PC-9 (cell line): ENCODE measurements at regions of chr11 and their contacts with region 1.

Region 1: DNA sequence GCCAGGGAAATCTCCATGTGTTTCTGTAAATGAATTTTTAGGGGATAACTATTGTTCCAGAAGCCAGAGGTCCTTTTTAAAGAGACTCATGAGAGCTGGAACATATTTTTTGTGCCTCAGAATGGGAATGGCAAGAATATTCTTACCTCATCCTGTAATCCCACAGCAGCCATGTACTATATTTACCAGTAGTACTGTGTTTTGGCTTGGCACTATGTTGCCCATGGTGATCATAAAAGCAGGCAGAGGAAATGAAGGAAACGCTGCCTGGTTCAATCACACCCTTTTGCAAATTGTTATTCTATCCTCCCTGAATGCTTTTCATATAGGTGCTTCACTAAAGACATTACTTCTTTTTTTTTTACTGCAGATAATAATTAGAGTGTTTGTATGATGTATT is 81.0 kb downstream of the ANO3 start:
- DNase-seq: no peak
- H3K4me3 ChIP-seq: no peak overlapping the region
- H3K27ac ChIP-seq: no peak overlapping the region
- H3K4me1 ChIP-seq: no peaks in the 10 kb centered on the region
- H3K27me3 ChIP-seq: no peaks in the 10 kb centered on the region
- CTCF ChIP-seq: no peak

Region 2: GRCh38 chr11:26423745-26424144 is 10.8 kb after region 1 on chr11:
- CTCF ChIA-PET with region 1: interaction called, 12 read pairs
- POLR2A ChIA-PET with region 1: no interaction called
- intact Hi-C with region 1: no loop called
- DNase-seq: no peak
- H3K4me3 ChIP-seq: no peak overlapping the region
- H3K27ac ChIP-seq: no peak overlapping the region
- H3K4me1 ChIP-seq: no peaks in the 10 kb centered on the region
- H3K27me3 ChIP-seq: no peaks in the 10 kb centered on the region
- CTCF ChIP-seq: no peak